ENCODE measurements at regions of chr6 and their contacts with region 1.

Region 1: DNA sequence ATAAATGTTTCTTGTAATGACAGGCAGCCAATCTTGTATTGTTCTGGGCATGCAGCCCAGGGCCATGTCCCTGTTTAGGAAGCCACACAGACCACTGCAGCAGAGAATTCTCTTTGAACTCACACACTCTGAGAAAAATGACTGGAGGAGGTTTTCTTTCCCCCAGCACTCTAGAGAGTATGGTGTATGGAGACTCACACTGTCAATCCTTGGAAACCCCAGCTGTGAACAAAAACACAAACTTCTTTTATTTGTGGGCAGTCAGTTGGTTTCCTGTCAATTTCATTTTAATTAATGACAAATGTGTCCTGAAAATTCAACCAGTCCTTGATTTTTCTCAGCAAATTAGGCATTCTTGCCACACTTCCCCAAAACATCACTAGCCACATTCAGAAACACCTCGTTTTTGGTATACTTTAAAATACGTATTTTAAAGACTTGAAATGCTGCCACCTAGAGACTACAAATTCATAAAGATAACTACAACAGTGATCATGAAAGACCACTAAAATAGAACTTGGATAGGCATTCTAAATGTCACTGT is 52.9 kb upstream of the UFL1 start:
- DNase-seq: no peak
- ATAC-seq: no peak
- H3K4me3 ChIP-seq: no peak overlapping the region
- H3K4me3 Mint-ChIP-seq: no peak overlapping the region
- H3K27ac ChIP-seq: no peak overlapping the region
- H3K27ac Mint-ChIP-seq: no peak overlapping the region
- H3K4me1 ChIP-seq: no peaks in the 10 kb centered on the region
- H3K4me1 Mint-ChIP-seq: no peaks in the 10 kb centered on the region
- H3K27me3 ChIP-seq: peaks cover 0 to 4% (median 0%) of the 10 kb centered on the region in 4 experiments
- H3K27me3 Mint-ChIP-seq: no peaks in the 10 kb centered on the region
- CTCF ChIP-seq: no peak

Region 2: GRCh38 chr6:95431637-95432228 is 1037.0 kb before region 1 on chr6:
- CTCF ChIA-PET with region 1: no interaction called
- POLR2A ChIA-PET with region 1: no interaction called
- intact Hi-C with region 1: loop called (anchors 2 kb)
- DNase-seq: peak; percentile 19
- ATAC-seq: no peak
- H3K4me3 ChIP-seq: no peak overlapping the region
- H3K4me3 Mint-ChIP-seq: no peak overlapping the region
- H3K27ac ChIP-seq: no peak overlapping the region
- H3K27ac Mint-ChIP-seq: no peak overlapping the region
- H3K4me1 ChIP-seq: no peaks in the 10 kb centered on the region
- H3K4me1 Mint-ChIP-seq: no peaks in the 10 kb centered on the region
- H3K27me3 ChIP-seq: no peaks in the 10 kb centered on the region
- H3K27me3 Mint-ChIP-seq: no peaks in the 10 kb centered on the region
- CTCF ChIP-seq: peak; percentile 69

Region 3: DNA sequence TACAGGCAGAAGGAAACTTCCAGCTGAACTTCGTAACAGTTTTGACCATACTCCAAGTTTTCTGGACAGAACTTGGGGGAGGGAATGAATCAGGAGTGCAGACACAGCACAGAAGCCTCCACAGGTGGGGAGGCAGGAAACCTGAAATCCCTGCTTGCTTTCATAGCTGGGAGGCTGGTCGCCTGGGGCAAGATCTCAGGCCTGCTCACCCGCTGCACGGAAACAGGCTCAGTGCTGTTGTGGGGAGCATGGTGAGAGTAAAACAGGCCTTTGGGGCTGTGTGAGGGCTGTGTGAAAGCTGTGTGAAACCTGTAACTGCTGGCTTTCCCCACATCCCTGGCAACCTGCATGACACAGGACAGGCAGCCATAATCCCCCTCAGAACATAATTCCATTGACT is 32.4 kb before region 1 on chr6:
- CTCF ChIA-PET with region 1: no interaction called
- POLR2A ChIA-PET with region 1: no interaction called
- intact Hi-C with region 1: no loop called
- DNase-seq: no peak
- ATAC-seq: no peak
- H3K4me3 ChIP-seq: no peak overlapping the region
- H3K4me3 Mint-ChIP-seq: no peak overlapping the region
- H3K27ac ChIP-seq: no peak overlapping the region
- H3K27ac Mint-ChIP-seq: no peak overlapping the region
- H3K4me1 ChIP-seq: no peaks in the 10 kb centered on the region
- H3K4me1 Mint-ChIP-seq: no peaks in the 10 kb centered on the region
- H3K27me3 ChIP-seq: no peaks in the 10 kb centered on the region
- H3K27me3 Mint-ChIP-seq: no peaks in the 10 kb centered on the region
- CTCF ChIP-seq: no peak

Region 4: GRCh38 chr6:96844530-96844929 is 375.8 kb after region 1 on chr6:
- CTCF ChIA-PET with region 1: no interaction called
- POLR2A ChIA-PET with region 1: no interaction called
- intact Hi-C with region 1: no loop called
- DNase-seq: no peak
- ATAC-seq: no peak
- H3K4me3 ChIP-seq: no peak overlapping the region
- H3K4me3 Mint-ChIP-seq: no peak overlapping the region
- H3K27ac ChIP-seq: no peak overlapping the region
- H3K27ac Mint-ChIP-seq: no peak overlapping the region
- H3K4me1 ChIP-seq: no peaks in the 10 kb centered on the region
- H3K4me1 Mint-ChIP-seq: no peaks in the 10 kb centered on the region
- H3K27me3 ChIP-seq: peaks cover 0 to 10% (median 0%) of the 10 kb centered on the region in 4 experiments
- H3K27me3 Mint-ChIP-seq: peaks cover 37% of the 10 kb centered on the region
- CTCF ChIP-seq: no peak